ENCODE measurements at regions of chr14 and their contacts with region 1.

Region 1: GRCh38 chr14:65164068-65164824 is 61.9 kb upstream of the MAX start:
- H3K4me3 Mint-ChIP-seq: no peak overlapping the region
- H3K27ac Mint-ChIP-seq: no peak overlapping the region
- H3K4me1 Mint-ChIP-seq: no peaks in the 10 kb centered on the region
- H3K27me3 Mint-ChIP-seq: peaks cover 8% of the 10 kb centered on the region

Region 2: DNA sequence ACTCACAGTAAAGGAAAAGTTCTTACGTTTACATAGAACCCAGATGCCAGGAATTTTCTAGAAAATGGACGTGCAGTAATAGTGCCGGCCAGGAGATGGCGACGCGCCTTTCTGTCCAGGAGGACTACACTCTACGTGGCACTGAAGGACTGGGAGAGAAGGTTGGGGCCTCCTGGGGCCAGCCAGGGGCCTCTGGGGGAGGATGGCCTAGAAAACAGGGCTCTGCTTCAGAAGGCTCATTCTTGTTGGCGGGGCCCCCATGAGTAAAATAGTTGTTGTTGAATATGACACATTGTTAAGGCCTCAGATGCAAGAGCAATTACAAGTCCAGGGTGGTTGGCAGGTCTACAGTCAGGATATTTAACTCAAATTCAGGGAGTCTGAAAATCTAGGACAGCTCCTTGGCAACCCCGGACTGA is 58.2 kb after region 1 on chr14:
- intact Hi-C with region 1: loop called (anchors 10 kb)
- H3K4me3 Mint-ChIP-seq: no peak overlapping the region
- H3K27ac Mint-ChIP-seq: no peak overlapping the region
- H3K4me1 Mint-ChIP-seq: peaks cover 24% of the 10 kb centered on the region
- H3K27me3 Mint-ChIP-seq: peaks cover 15% of the 10 kb centered on the region

Region 3: DNA sequence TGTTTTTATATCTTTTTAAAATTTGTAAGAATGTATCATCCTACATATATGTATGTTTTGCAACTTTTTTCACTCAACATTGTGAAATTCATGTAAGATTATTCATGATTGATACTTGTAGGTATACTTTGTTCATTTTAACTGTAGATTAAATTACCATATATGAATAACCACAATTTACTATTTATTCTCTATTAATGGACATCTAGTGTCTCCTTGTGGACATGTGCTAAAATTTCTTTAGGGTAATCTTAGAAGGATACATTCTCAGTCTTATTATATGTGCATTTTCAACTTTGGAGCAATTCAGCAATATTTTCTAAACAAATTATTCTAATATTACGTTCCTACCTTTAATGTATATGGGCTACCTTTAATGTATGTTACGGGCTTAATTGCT is 440.7 kb after region 1 on chr14:
- intact Hi-C with region 1: loop called (anchors 10 kb)
- H3K4me3 Mint-ChIP-seq: no peak overlapping the region
- H3K27ac Mint-ChIP-seq: no peak overlapping the region
- H3K4me1 Mint-ChIP-seq: no peaks in the 10 kb centered on the region
- H3K27me3 Mint-ChIP-seq: no peaks in the 10 kb centered on the region

Region 4: DNA sequence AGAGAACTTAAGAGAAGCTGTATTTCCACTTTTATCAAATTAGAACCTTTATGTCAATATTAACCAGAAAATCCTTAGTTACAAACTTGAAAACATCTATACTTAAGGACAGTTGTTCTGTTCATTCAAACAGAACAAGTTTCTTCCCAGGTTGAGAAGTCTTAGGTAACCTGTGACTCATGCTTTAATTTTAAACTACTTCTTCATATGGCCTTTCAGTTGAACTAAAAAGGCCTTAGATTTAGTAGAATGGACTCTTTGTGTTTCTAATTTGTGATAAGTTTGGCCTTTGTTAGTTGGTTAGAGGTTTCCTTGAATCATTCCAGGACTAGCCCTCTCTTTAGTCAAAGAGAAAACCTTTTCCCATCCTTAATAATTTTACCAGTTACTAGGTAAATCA is 522.5 kb after region 1 on chr14:
- intact Hi-C with region 1: no loop called
- H3K4me3 Mint-ChIP-seq: no peak overlapping the region
- H3K27ac Mint-ChIP-seq: no peak overlapping the region
- H3K4me1 Mint-ChIP-seq: no peaks in the 10 kb centered on the region
- H3K27me3 Mint-ChIP-seq: no peaks in the 10 kb centered on the region

Region 5: GRCh38 chr14:65824285-65824977 is 660.2 kb after region 1 on chr14:
- intact Hi-C with region 1: loop called (anchors 1 kb)
- H3K4me3 Mint-ChIP-seq: no peak overlapping the region
- H3K27ac Mint-ChIP-seq: no peak overlapping the region
- H3K4me1 Mint-ChIP-seq: no peaks in the 10 kb centered on the region
- H3K27me3 Mint-ChIP-seq: peaks cover 2% of the 10 kb centered on the region

Region 6: DNA sequence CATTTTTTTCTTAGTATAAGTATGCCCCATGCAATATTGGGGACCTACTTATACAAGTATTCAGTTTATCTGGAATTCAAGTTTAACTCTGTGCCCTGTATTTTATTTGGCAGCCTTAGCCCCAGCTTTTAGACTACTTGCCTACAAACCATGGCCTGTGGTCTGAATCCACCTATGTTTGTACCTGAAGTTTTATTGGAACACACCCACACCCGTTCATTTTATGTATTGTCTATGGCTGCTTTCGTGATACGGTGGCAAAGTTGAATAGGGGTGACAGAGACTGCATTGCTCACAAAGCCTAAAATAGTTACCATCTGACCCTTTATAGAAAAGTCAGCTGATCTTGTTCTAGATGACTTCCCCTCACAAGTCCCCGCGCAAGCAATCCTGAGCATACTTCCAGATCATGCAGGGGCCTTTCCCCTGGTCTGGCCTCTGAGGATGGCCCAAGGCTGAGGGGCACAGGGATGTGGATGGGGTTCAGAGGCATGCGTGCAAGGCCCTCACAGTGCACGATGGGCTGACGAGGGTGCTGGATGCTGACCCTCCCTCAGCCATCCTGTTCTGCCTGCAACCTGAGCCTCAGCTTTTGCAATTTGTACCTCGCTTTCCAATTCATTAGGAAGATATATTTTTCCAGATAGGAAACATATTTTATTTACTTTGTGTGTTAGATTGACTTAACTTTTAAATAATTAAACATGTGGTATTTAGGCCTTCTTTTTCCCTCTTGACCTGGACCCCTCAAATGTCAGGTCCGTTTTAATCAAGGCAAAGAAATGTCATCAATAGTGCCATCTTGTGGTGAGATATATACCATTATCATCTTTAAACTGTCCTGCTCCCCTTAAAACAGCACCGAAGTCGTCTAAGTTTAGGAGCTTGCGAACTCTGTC is 794.7 kb after region 1 on chr14:
- intact Hi-C with region 1: loop called (anchors 1 kb)
- H3K4me3 Mint-ChIP-seq: no peak overlapping the region
- H3K27ac Mint-ChIP-seq: no peak overlapping the region
- H3K4me1 Mint-ChIP-seq: peaks cover 5% of the 10 kb centered on the region
- H3K27me3 Mint-ChIP-seq: no peaks in the 10 kb centered on the region

Measured in dendritic cell treated with granulocyte-macrophage colony-stimulating factor and Interleukin-4, amounts not matched to agents 40 ng/mL and 50 ng/mL, for 4 days (primary cell).